ENCODE measurements at regions of chrX and their contacts with region 1.

Region 1: DNA sequence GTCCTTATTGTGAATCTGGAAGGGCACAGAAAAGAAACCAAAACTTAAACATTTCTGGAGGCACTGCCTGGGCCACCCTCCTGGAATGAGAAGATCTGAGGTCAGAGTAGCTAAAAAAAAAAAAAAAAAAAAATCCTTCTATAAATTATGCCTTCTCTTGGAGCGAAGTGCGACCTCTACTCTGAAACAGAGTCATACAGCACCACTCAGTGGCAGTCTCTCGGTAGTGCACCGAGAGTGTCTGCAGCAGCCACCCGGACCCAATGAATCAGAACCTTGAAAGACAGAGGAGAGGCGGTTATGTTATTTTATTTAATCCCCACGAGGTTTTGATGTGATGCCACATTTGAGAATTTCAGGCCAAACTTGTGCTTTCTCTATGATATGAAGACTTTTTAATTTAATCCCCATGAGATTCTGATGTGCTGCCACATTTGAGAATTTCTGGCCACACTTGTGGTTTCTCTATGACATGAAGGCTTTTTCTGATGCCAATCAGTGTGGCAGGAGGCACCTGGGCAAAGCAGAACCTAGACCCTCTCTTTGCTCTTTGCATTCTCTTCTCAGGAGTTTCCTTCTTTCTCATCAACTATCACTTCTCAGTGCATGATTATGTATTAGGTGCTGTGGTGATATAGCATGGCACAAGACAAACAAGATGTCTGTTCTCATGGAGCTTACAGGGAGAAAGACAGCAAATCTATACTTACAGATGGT is 5.6 kb upstream of the CT47C1 start:
- DNase-seq: peak; percentile 72
- H3K4me3 Mint-ChIP-seq: no peak overlapping the region
- H3K27ac Mint-ChIP-seq: no peak overlapping the region
- H3K4me1 Mint-ChIP-seq: no peaks in the 10 kb centered on the region
- H3K27me3 Mint-ChIP-seq: no peaks in the 10 kb centered on the region

Region 2: GRCh38 chrX:117996918-117997480 is 1070.2 kb before region 1 on chrX:
- CTCF ChIA-PET with region 1: no interaction called
- intact Hi-C with region 1: no loop called
- DNase-seq: no peak
- H3K4me3 Mint-ChIP-seq: no peak overlapping the region
- H3K27ac Mint-ChIP-seq: no peak overlapping the region
- H3K4me1 Mint-ChIP-seq: no peaks in the 10 kb centered on the region
- H3K27me3 Mint-ChIP-seq: no peaks in the 10 kb centered on the region

Region 3: GRCh38 chrX:118621081-118621759 is 446.0 kb before region 1 on chrX:
- CTCF ChIA-PET with region 1: no interaction called
- intact Hi-C with region 1: no loop called
- DNase-seq: no peak
- H3K4me3 Mint-ChIP-seq: no peak overlapping the region
- H3K27ac Mint-ChIP-seq: no peak overlapping the region
- H3K4me1 Mint-ChIP-seq: no peaks in the 10 kb centered on the region
- H3K27me3 Mint-ChIP-seq: no peaks in the 10 kb centered on the region

Region 4: GRCh38 chrX:119004920-119005524 is 62.2 kb before region 1 on chrX:
- CTCF ChIA-PET with region 1: interaction called, 13 read pairs
- intact Hi-C with region 1: loop called (anchors 1 kb)
- DNase-seq: peak; percentile 63
- H3K4me3 Mint-ChIP-seq: no peak overlapping the region
- H3K27ac Mint-ChIP-seq: no peak overlapping the region
- H3K4me1 Mint-ChIP-seq: peaks cover 12% of the 10 kb centered on the region
- H3K27me3 Mint-ChIP-seq: no peaks in the 10 kb centered on the region